ENCODE measurements at regions of chr22 and their contacts with region 1.

Region 1: GRCh38 chr22:21807544-21808529 is 59.6 kb downstream of the MAPK1 start:
- DNase-seq: no peak

Region 2: DNA sequence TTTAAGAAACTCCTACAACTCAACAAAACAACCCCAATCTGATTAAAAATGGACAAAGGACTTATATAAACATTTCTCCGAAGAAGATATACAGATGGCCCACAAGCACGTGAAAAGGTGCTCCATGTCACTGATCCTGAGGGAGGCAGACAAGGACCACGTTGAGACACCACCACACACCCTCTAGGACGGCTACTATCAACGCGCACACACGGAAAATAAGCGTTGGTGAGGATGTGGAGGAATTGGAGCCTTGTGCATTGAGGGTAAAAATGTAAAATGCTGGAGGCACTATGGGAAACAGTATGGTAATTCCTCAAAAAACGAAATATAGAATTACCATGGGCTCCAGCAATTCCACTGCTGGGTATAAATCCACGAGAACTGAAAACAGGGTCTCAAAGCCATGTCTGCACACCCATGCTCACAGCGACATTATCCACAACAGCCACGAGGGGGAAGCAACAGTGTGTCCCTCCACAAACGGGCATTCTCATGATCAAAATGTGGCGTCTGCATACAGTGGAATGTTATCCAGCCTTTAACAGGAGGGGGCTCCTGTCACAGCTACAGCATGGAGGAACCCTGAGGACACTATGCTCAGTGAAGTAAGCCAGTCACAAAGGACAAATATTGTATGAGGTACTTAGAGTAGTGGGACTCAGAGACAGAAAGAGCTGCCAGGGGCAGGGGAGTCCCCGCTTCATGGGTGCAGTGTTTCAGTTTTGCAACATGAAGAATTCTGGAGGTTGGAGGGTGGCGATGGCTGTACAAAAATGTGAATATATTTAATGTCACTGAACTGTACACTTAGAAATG is 94.7 kb before region 1 on chr22:
- in situ Hi-C with region 1: loop called (anchors 10 kb)
- DNase-seq: peak; percentile 45

Region 3: GRCh38 chr22:21889251-21889990 is 81.6 kb after region 1 on chr22:
- in situ Hi-C with region 1: no loop called
- DNase-seq: no peak

Region 4: GRCh38 chr22:21938071-21938822 is 130.4 kb after region 1 on chr22:
- in situ Hi-C with region 1: loop called (anchors 10 kb)
- DNase-seq: peak; percentile 97

Measured in Caki2 (cell line).